CD4-positive, alpha-beta memory T cell (primary cell): ENCODE measurements at regions of chr10 and their contacts with region 1.

Region 1: GRCh38 chr10:62019013-62019684 is 117.7 kb downstream of the ARID5B start:
- DNase-seq: no peak
- H3K4me3 ChIP-seq: no peak overlapping the region
- H3K4me3 Mint-ChIP-seq: peak overlapping the region in 4 of 8 donors; percentile 0 to 66 (median 27)
- H3K27ac ChIP-seq: no peak overlapping the region
- H3K27ac Mint-ChIP-seq: peak overlapping the region in 5 of 7 donors; percentile 3 to 87 (median 68)
- H3K4me1 ChIP-seq: peaks cover 67% of the 10 kb centered on the region
- H3K4me1 Mint-ChIP-seq: peaks cover 49 to 82% (median 67%) of the 10 kb centered on the region in 4 donors
- H3K27me3 ChIP-seq: no peaks in the 10 kb centered on the region
- H3K27me3 Mint-ChIP-seq: no peaks in the 10 kb centered on the region

Region 2: DNA sequence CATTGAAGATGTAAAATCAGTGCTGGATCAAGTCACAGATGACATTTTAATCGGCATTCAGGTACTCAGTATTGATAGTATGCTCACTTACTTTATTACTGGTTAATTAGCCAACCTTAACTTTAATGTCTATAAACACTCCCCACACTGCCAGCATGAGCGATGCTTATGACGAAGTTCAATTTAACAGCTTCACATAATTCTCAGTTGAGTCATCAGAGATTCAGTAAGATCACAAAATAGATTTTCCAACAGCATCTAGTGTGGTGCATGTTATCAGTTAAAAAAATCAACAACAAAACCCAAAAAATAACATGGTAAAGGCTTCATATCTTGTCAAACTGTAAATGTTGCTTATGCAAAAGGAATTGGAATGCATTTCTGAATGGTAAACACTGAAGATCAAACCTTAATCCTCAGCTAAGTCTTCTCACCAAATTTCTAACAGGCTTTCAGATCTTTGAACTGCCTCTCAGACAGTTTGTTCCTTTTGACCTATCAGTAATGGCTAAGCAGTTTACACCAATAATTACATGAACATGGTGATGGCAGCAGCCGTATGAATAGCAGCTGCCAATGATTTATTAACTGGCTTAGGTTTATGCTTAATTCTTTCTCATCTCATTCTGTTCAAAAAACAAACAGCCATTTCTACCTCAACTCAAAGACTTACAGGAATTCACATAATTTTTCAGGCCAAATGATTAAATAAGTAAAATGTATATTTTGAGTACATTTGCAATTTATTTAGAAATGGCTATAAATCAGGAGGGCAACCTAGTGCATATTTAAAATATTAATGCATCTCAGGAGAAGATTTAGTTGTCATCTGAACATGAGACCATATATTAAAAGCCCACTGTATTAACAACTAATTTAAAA is 258.0 kb before region 1 on chr10:
- CTCF ChIA-PET with region 1: no interaction called
- POLR2A ChIA-PET with region 1: no interaction called
- intact Hi-C with region 1: no loop called
- DNase-seq: no peak
- H3K4me3 ChIP-seq: no peak overlapping the region
- H3K4me3 Mint-ChIP-seq: no peak overlapping the region
- H3K27ac ChIP-seq: no peak overlapping the region
- H3K27ac Mint-ChIP-seq: peak overlapping the region in 1 of 7 donors; percentile 53
- H3K4me1 ChIP-seq: peaks cover 13% of the 10 kb centered on the region
- H3K4me1 Mint-ChIP-seq: peaks cover 12 to 17% (median 12%) of the 10 kb centered on the region in 4 donors
- H3K27me3 ChIP-seq: no peaks in the 10 kb centered on the region
- H3K27me3 Mint-ChIP-seq: no peaks in the 10 kb centered on the region

Region 3: DNA sequence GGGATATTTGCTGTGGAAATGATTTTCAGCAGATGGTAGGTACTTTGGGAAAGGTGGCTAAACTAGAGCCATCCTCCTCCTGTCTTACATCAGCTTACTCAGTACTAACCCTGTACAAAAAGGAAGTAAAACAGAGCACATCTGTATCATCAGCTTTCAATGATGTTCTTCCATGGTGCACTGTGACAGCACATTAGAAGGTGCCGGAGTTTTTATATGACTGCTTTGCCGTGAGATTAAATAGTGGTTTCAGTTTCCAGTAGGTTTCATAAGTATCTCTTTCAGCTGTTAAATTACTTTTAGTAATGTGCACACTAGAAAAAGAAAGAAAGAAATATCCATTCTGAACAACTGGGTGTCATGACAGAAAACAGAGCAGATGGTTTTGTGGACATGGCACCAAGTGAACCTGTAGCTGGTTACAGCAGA is 31.2 kb before region 1 on chr10:
- CTCF ChIA-PET with region 1: interaction called, 4 read pairs
- POLR2A ChIA-PET with region 1: interaction called, 7 read pairs
- intact Hi-C with region 1: loop called (anchors 5 kb)
- DNase-seq: peak in 4 of 5 donors; percentile 48 to 56 (median 50)
- H3K4me3 ChIP-seq: peak overlapping the region in 1 of 2 donors; percentile 6
- H3K4me3 Mint-ChIP-seq: peak overlapping the region; percentile 34 to 77 (median 60)
- H3K27ac ChIP-seq: peak overlapping the region; percentile 47
- H3K27ac Mint-ChIP-seq: peak overlapping the region; percentile 88 to 96 (median 92)
- H3K4me1 ChIP-seq: peaks cover 69% of the 10 kb centered on the region
- H3K4me1 Mint-ChIP-seq: peaks cover 52 to 81% (median 67%) of the 10 kb centered on the region in 4 donors
- H3K27me3 ChIP-seq: no peaks in the 10 kb centered on the region
- H3K27me3 Mint-ChIP-seq: no peaks in the 10 kb centered on the region

Region 4: GRCh38 chr10:62005281-62005680 is 13.9 kb before region 1 on chr10:
- CTCF ChIA-PET with region 1: interaction called, 3 read pairs
- POLR2A ChIA-PET with region 1: interaction called, 3 read pairs
- intact Hi-C with region 1: loop called (anchors 2 kb)
- DNase-seq: no peak
- H3K4me3 ChIP-seq: no peak overlapping the region
- H3K4me3 Mint-ChIP-seq: no peak overlapping the region
- H3K27ac ChIP-seq: no peak overlapping the region
- H3K27ac Mint-ChIP-seq: peak overlapping the region in 3 of 7 donors; percentile 36 to 62 (median 44)
- H3K4me1 ChIP-seq: peaks cover 22% of the 10 kb centered on the region
- H3K4me1 Mint-ChIP-seq: peaks cover 43 to 88% (median 57%) of the 10 kb centered on the region in 4 donors
- H3K27me3 ChIP-seq: no peaks in the 10 kb centered on the region
- H3K27me3 Mint-ChIP-seq: no peaks in the 10 kb centered on the region